Esophagus muscularis mucosa (tissue), 4 donors: ENCODE measurements at regions of chr4 and their contacts with region 1.

Region 1: DNA sequence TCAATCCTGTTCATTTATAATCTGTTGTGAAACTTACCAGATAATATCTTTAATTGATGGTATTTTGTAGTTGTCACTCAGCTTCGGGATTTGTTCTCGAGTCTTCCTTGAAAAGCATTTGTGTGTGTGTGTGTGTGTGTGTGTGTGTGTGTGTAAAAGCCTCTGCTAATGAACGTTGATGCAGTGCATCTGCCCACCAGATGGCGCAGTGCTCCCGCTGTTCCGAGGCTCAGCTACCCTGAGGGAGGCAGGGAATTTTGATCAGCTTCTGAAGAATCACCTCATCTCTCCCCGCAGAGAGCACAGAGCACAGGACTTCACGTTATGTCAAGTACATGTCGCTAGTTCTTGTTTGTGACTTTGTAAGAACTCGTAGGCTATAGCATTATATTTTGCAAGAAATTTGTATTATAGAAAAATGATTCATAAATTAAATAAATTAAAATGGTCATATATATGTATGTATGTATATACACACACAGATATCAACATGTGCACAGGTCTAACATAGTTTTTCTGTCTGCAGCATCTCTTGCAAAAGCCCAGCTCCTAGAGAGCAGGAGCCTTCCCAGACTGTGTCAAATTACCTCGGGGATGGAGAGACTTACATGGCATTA is 316.7 kb upstream of the IGFBP7 start:
- DNase-seq: no peak
- H3K4me3 ChIP-seq: no peak overlapping the region
- H3K27ac ChIP-seq: no peak overlapping the region
- H3K4me1 ChIP-seq: peaks cover 0 to 16% (median 13%) of the 10 kb centered on the region in 4 donors
- H3K27me3 ChIP-seq: no peaks in the 10 kb centered on the region
- CTCF ChIP-seq: peak; percentile 65 to 70 (median 65)
- EP300 ChIP-seq: no peak
- POLR2A ChIP-seq: no peak

Region 2: DNA sequence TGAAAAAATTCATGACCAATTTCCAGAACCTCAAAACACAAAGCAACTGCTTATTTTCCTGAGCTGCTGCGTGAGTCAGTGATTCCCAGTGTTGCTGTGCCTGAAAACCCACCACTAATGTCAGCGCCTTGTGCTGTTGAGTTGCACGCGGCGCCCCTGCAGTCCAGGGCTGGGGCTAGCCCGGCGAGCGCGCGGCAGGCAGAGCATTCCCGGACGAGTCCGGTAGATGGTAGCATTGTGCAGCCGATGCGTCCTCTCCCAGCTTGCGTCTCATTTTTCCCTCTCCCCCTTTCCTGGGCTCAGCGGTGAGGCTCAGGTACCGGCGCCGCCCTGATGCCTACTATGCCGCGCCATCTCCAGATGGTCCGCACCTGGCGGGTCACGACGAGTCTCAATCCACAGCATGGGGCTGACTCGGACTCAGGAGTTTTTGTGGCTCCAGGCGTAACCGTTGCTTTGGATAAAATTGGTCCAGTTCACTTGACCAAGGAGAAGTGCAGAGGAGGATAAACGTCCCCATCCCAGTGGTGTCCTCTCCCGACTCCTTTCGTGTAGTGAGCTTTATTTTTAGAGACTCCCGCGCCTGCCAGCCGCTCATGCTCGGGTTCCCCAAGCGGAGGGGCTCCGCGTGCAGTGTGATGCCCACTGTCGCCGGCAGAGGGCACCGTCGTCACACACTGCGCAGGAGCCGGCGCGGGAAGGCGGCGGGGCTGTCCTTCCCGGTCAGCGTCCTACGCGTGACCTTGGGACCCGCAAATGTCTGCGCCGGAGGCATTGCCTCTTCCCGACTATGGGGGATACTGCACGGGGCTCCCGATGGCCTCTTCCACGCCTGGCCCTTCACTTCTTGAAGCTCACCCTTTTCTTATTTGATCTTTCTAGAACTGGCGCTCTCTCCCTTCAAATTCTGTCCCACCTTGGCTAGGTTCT is 263.1 kb before region 1 on chr4:
- intact Hi-C with region 1: loop called (anchors 5 kb)
- DNase-seq: peak; percentile 94
- H3K4me3 ChIP-seq: peak overlapping the region; percentile 62 to 78 (median 66)
- H3K27ac ChIP-seq: peak overlapping the region; percentile 71 to 82 (median 78)
- H3K4me1 ChIP-seq: peaks cover 8 to 14% (median 12%) of the 10 kb centered on the region in 4 donors
- H3K27me3 ChIP-seq: no peaks in the 10 kb centered on the region
- CTCF ChIP-seq: peak; percentile 74 to 90 (median 87)
- EP300 ChIP-seq: no peak
- POLR2A ChIP-seq: no peak